Posterior cingulate gyrus (tissue), 11 donors: ENCODE measurements at regions of chr6 and their contacts with region 1.

Region 1: DNA sequence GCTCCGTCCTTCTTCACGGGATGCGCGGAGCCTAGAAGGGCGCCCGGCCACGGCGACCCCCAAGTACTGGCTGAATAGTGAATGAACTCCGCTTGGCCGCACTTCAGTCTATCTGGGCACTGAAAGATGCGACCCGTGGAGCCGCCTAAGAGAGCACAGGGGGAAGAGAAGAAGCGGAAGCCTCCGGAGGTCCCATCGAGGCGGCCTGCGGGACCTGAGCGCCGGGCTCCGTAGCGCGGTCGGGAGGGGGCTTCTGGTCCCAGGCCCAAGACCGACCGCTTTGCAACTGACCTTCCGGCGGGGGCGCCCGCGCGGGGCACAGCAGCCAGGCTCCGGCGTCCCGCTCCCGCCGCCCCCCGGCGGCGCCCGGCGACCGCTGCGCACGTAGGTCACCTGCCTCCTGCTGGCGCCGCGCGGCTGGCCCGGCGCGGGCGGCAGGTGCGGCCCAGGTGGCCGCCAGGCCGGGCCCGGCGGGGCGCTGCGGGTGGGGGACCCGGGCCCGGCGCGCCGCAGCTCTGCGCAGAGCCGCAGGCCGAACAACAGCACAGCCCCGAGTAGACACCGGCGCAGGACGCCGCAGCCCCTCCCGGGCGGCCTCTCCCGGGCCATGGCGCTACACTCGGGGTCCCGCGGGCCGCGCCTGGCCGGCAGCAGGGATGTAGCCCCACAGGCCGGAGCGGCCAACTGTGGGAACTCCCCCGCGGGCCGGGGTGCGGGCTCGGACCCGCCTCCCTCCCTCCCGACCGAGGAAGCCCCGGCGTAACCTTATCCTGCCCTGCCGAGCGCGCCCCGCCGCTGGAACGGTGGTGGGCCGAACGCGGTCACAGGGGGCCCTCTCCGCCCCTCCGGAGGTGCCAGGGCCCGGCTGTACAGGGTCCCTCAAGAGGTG is at the start of gene METTL24:
- DNase-seq: peak in 3 of 10 donors; percentile 22 to 86 (median 75)

Region 2: DNA sequence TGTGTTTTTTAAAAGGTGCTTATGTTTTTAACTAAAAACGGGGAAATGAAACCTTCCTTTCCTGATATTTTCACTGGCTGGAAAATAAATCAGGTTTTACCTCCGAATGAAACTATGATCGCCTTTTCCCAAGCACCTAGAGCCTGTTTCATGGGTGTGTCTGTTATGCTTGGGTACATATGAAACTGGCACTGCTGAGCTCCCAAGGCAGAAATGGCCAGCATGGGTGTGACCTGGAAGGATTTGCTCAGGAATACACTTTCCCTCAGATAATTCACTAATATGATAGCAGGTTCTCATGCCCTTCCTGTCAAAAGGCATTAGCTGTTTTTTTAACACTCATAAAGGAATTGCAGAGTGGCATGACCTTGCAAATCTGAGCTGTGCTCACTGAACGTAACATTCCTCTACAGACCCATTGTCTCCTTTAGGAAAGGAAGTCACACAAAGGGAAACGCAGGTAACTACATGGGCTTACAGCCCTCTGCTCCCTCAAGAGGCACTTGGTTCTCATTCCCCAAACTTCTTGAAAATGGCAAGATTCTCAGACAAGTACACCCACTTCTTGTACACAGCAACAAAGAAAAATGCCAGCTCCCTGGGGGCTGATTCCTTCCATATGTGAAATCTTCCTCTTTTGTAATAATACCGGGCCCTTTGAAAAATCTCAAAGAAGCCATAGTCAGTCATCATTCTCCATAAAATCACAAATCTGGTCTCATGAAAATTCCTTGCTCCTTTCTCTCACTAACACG is 72.4 kb before region 1 on chr6:
- intact Hi-C with region 1: loop called (anchors 10 kb)
- DNase-seq: no peak

Region 3: GRCh38 chr6:110378552-110378951 is 20.6 kb after region 1 on chr6:
- intact Hi-C with region 1: no loop called
- DNase-seq: peak in 1 of 10 donors; percentile 40